OCI-LY7 (cell line): ENCODE measurements at regions of chr15 and their contacts with region 1.

Region 1: DNA sequence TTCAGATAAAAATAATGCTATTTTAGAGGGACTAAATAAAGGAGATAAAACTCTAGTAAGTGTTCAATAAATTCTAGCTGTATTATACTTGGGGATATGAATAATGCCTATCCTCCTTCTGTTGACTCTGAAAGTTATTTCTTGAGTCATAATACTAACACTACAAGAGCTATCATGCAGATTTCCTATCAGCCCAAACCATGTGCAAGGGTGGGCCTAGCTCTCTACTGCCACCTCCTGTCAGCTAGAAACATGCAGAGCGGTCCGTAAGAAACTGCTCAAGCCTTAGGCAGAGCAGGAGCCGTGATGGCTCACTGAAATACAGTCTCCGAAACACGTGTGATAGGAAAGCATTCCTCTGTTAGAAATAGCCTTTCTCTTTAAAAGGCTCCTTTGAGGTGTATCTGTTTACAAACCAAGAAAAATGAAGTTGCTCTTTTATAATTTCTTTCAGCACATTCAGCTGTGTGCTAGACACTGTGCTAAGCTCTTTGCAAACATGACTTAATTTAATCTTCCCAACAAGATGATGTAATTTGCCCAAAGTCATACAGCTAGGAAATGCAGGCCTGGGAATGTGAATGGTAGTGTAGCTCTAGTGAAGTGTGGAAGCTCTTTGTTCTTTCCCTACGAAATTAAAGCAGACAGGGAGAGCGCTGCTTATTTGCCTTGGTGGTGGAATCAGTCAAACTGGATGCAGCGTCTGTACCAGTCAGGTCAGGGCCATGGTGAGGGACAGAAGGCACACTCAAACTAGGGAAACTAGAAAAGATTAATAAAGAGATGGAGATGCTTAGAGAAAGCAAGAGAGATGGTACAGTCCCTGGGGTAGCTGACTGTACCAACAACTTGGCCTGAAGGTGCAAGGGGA is 43.1 kb downstream of the MTHFS start:
- DNase-seq: peak; percentile 70
- H3K4me3 ChIP-seq: no peak overlapping the region
- H3K27ac ChIP-seq: no peak overlapping the region
- H3K4me1 ChIP-seq: no peaks in the 10 kb centered on the region
- CTCF ChIP-seq: peak; percentile 97

Region 2: GRCh38 chr15:79339564-79340314 is 514.0 kb before region 1 on chr15:
- CTCF ChIA-PET with region 1: interaction called, 6 read pairs
- POLR2A ChIA-PET with region 1: no interaction called
- intact Hi-C with region 1: loop called (anchors 1 kb)
- DNase-seq: peak; percentile 47
- H3K4me3 ChIP-seq: no peak overlapping the region
- H3K27ac ChIP-seq: no peak overlapping the region
- H3K4me1 ChIP-seq: no peaks in the 10 kb centered on the region
- CTCF ChIP-seq: peak; percentile 91

Region 3: GRCh38 chr15:79380755-79381497 is 472.8 kb before region 1 on chr15:
- CTCF ChIA-PET with region 1: interaction called, 3 read pairs
- POLR2A ChIA-PET with region 1: no interaction called
- intact Hi-C with region 1: loop called (anchors 5 kb)
- DNase-seq: peak; percentile 74
- H3K4me3 ChIP-seq: no peak overlapping the region
- H3K27ac ChIP-seq: no peak overlapping the region
- H3K4me1 ChIP-seq: no peaks in the 10 kb centered on the region
- CTCF ChIP-seq: peak; percentile 96

Region 4: DNA sequence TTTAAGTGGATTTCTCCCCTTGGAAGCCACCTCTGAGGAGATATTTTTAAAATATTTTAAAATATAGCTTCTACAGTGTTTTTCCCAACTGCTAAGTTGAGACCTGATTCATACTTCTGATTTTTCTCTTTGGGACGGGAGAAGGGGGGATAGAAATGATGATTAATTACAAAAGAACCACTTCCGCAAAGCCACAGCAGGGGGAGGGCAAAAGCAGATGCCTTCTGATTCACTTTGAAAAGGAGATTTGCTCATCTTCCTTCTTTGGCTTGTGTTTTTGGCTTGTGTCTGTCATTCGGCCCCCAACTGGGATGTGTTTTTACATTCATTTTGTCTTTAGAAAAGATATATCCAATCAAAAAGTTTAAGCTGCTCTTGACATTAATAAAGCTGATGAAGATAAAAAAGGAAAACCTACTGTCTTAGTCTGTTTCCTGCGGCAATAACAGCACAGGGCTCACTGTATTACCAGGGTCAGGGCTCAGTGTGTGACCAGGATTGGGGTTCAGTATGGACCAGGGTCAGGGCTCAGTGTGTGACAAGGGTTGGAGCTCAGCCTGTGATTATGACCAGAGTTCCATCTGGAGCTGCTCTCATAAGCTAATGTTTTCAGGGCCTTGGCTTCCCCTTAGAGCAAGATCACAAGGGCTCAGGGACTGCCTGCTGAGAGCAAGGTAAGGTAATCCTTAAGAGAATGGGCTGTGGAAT is 180.1 kb before region 1 on chr15:
- CTCF ChIA-PET with region 1: no interaction called
- POLR2A ChIA-PET with region 1: interaction called, 3 read pairs
- intact Hi-C with region 1: loop called (anchors 5 kb)
- DNase-seq: no peak
- H3K4me3 ChIP-seq: no peak overlapping the region
- H3K27ac ChIP-seq: no peak overlapping the region
- H3K4me1 ChIP-seq: no peaks in the 10 kb centered on the region
- CTCF ChIP-seq: no peak

Region 5: DNA sequence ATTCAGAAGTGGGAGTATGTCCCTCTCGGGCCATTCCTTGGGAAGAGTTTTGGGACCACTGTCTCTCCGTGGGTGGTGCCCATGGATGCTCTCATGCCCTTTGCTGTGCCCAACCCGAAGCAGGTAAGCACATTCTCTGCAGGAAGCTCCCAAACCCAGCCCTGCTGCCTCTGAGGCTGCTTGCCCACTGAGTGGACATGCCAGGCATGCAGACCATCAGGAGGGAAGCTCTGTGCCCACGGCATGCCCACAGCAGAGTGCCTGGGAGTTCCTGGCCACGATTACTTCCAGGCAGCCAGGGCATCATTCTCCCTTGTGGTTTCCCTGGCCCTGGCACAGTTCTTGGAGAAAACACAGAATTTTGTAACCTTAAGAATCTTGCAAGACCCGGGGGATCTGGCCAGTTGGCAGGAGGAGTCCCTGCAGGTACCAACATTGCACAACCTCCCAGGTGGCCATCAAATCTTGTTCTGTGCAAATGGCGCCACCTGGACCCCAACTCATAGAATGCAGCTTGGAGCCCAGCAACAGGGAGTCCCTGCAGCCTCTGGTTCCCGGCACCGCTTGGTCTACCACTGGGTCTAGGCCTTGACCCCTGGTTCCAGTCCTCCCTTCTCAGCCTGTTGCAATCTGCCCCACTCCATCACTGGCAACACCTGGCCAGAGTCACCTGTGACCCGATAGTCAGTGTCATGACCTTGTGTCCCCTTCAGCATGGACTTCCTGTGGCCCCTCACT is 319.5 kb after region 1 on chr15:
- CTCF ChIA-PET with region 1: interaction called, 3 read pairs
- POLR2A ChIA-PET with region 1: no interaction called
- intact Hi-C with region 1: loop called (anchors 5 kb)
- DNase-seq: peak; percentile 79
- H3K4me3 ChIP-seq: no peak overlapping the region
- H3K27ac ChIP-seq: no peak overlapping the region
- H3K4me1 ChIP-seq: no peaks in the 10 kb centered on the region
- CTCF ChIP-seq: peak; percentile 83